Esophagus squamous epithelium (tissue), 5 donors: ENCODE measurements at regions of chr21 and their contacts with region 1.

Region 1: DNA sequence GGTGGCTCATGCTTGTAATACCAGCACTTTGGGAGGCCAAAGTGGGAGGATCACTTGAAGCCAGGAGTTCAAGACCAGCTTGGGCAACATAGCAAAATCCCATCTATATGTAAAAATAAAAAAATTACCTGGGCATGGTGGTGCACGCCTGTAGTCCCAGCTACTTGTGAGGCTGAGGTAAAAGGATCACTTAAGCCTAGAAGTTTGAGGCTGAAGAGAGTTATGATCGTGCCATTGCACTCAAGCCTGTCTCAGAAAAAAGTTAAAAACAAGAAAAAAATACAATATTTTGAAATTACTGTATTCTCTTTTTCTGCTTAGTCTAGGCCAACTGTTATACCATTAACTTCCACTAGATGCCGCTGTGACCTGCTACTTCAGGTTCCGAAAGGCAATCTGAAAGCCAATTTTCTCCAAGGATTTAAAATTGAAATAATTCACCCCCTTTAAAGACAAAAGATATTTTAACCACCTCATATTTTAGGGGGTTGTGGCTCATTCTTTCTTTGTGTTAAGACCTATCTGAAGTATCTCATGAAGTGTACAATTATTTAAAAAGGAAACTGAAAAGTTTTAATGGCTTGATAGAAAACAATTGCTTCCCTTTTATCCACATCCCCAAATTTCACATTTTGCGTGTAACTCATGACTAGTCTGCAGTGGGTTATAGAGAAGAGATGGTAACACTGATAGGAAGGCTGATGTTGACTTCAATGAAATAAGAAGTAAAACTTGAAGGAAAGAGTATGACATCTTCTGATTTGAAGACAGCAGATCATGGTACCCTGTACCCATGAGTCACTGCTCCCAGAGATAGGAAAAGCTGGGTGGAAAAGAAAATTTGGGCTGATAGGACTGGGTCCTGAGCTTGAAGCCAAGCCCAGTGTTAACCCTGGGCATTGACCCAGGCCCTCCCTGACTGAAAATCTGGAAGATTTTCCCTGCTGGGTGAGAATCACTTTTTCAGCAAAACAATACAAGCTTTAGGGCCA is 24.4 kb upstream of the CLDN14 start:
- DNase-seq: no peak
- H3K4me3 ChIP-seq: no peak overlapping the region
- H3K27ac ChIP-seq: no peak overlapping the region
- H3K4me1 ChIP-seq: peaks cover 6 to 55% (median 8%) of the 10 kb centered on the region in 3 donors
- H3K27me3 ChIP-seq: peaks cover 0 to 4% (median 0%) of the 10 kb centered on the region in 4 donors
- CTCF ChIP-seq: peak; percentile 78 to 96 (median 90)
- POLR2A ChIP-seq: no peak

Region 2: DNA sequence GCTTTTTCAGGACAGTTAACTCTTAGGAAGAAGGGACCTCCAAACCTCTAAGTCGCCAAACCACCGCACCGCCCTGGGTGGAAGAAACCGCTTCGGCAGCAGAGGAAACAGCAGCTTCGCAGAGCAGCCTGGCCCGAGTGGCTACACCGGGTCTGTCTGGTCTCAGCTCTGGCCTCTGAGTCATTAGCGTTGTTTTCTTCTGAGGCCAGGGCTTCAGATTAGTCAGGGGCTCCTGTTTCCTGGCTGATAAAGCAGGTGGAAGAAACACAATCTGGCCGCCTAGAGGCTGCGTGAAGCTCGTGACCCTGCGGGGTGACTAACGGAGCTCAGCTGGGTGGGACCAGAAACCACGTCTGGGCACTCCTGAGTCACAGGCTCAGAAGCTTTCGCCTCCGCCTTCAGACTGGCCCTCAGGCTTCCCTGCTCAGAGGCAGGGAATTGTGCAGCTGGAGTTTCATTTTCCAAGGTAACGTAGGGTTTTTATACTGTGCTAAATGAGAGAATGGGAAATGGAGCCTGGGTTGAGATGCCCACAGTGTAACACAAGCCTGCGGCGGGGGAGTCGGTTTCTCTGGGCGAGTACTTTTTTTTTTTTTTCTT is 74.3 kb before region 1 on chr21:
- intact Hi-C with region 1: loop called (anchors 10 kb)
- DNase-seq: peak; percentile 22
- H3K4me3 ChIP-seq: peak overlapping the region; percentile 3 to 50 (median 36)
- H3K27ac ChIP-seq: peak overlapping the region; percentile 78 to 87 (median 82)
- H3K4me1 ChIP-seq: peaks cover 0 to 64% (median 31%) of the 10 kb centered on the region in 3 donors
- H3K27me3 ChIP-seq: no peaks in the 10 kb centered on the region
- CTCF ChIP-seq: peak in 3 of 6 experiments; percentile 2 to 38 (median 34)
- POLR2A ChIP-seq: peak in 3 of 4 donors; percentile 38 to 68 (median 58)

Region 3: DNA sequence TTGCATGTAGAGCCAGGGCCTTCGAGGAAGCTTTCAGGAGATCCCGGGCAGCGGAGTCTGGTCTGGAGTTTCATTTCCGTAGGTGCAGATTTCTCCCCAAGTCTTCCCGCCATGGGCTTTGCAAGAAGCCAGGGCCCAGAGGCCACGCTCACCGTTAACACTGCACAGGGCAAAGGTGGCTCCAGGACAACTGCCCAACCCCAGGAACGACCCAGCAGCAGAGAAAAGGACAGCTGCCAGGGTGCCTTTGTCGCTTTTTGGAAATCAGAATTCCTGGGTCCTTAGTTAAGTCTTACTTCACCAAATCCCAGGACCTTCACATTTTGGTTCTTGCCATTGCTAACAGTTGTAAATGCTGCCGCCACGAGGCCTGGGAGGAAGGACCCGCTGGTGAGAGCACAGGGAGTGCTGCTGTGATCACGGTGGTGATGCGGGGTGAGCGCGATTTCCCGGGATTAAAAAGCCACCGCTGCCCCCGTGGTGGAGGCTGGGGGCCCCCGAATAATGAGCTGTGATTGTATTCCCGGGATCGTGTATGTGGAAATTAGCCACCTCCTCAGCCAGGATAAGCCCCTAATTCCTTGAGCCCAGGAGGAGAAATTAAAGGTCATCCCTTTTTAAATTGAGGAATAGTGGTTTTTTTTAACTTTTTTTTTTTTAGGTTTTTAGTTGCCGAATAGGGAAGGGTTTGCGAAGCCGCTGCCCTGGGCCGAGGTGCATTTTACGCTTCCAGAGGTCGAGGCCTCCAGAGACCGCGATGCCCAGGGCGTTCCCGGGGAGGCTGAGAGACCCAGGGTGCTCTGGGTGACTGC is 202.8 kb after region 1 on chr21:
- intact Hi-C with region 1: loop called (anchors 10 kb)
- DNase-seq: no peak
- H3K4me3 ChIP-seq: peak overlapping the region; percentile 31 to 78 (median 74)
- H3K27ac ChIP-seq: peak overlapping the region; percentile 81 to 97 (median 96)
- H3K4me1 ChIP-seq: peaks cover 28 to 96% (median 44%) of the 10 kb centered on the region in 3 donors
- H3K27me3 ChIP-seq: peaks cover 0 to 100% (median 28%) of the 10 kb centered on the region in 4 donors
- CTCF ChIP-seq: no peak
- POLR2A ChIP-seq: no peak

Region 4: DNA sequence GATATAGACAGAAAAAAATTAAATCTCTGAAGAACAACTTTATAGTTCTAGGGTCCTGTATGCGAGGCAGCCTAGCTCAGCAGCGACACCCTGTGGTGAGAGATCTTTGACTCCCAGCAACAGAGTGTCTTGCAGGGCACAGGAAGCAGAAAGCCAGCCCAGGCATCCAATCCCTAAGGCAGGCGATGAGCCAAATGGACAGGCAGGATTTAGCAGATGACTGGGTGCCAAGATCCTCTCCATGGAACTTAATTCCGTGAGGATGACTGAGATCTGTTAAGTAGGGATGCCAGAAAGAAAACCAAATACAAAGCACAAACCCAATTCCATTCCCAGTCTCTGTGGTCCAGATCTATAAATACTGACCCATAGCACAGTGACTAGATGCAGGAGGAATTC is 423.4 kb after region 1 on chr21:
- intact Hi-C with region 1: loop called (anchors 10 kb)
- DNase-seq: no peak
- H3K4me3 ChIP-seq: no peak overlapping the region
- H3K27ac ChIP-seq: no peak overlapping the region
- H3K4me1 ChIP-seq: peaks cover 0 to 40% (median 0%) of the 10 kb centered on the region in 3 donors
- H3K27me3 ChIP-seq: no peaks in the 10 kb centered on the region
- CTCF ChIP-seq: peak; percentile 78 to 90 (median 87)
- POLR2A ChIP-seq: no peak